PC-9 (cell line): ENCODE measurements at regions of chr5 and their contacts with region 1.

Region 1: GRCh38 chr5:77239126-77239741 is 28.8 kb downstream of the PDE8B start:
- DNase-seq: peak in 1 of 2 experiments; percentile 14
- H3K4me3 ChIP-seq: no peak overlapping the region
- H3K27ac ChIP-seq: no peak overlapping the region
- H3K4me1 ChIP-seq: no peaks in the 10 kb centered on the region
- H3K27me3 ChIP-seq: no peaks in the 10 kb centered on the region
- CTCF ChIP-seq: peak; percentile 68

Region 2: GRCh38 chr5:76337953-76338451 is 901.2 kb before region 1 on chr5:
- CTCF ChIA-PET with region 1: no interaction called
- POLR2A ChIA-PET with region 1: no interaction called
- intact Hi-C with region 1: no loop called
- DNase-seq: peak; percentile 72 to 76
- H3K4me3 ChIP-seq: no peak overlapping the region
- H3K27ac ChIP-seq: no peak overlapping the region
- H3K4me1 ChIP-seq: 0 out of 2 replicates have a peak, but pooled peaks cover 4% of the 10 kb centered on the region
- H3K27me3 ChIP-seq: no peaks in the 10 kb centered on the region
- CTCF ChIP-seq: peak; percentile 78

Region 3: GRCh38 chr5:77101298-77101697 is 137.9 kb before region 1 on chr5:
- CTCF ChIA-PET with region 1: no interaction called
- POLR2A ChIA-PET with region 1: no interaction called
- intact Hi-C with region 1: no loop called
- DNase-seq: no peak
- H3K4me3 ChIP-seq: no peak overlapping the region
- H3K27ac ChIP-seq: no peak overlapping the region
- H3K4me1 ChIP-seq: no peaks in the 10 kb centered on the region
- H3K27me3 ChIP-seq: no peaks in the 10 kb centered on the region
- CTCF ChIP-seq: no peak

Region 4: GRCh38 chr5:77143998-77144836 is 95.0 kb before region 1 on chr5:
- CTCF ChIA-PET with region 1: interaction called, 5 read pairs
- POLR2A ChIA-PET with region 1: no interaction called
- intact Hi-C with region 1: loop called (anchors 1 kb)
- DNase-seq: peak; percentile 39 to 56
- H3K4me3 ChIP-seq: no peak overlapping the region
- H3K27ac ChIP-seq: no peak overlapping the region
- H3K4me1 ChIP-seq: no peaks in the 10 kb centered on the region
- H3K27me3 ChIP-seq: no peaks in the 10 kb centered on the region
- CTCF ChIP-seq: peak; percentile 86